ENCODE measurements at regions of chr21 and their contacts with region 1.

Region 1: GRCh38 chr21:43909741-43910486 is 44.9 kb downstream of the AGPAT3 start:
- DNase-seq: no peak
- H3K4me3 ChIP-seq: no peak overlapping the region
- H3K27ac ChIP-seq: no peak overlapping the region
- H3K4me1 ChIP-seq: peaks cover 9% of the 10 kb centered on the region
- H3K27me3 ChIP-seq: no peaks in the 10 kb centered on the region
- CTCF ChIP-seq: no peak

Region 2: GRCh38 chr21:43816611-43817478 is 93.1 kb before region 1 on chr21:
- CTCF ChIA-PET with region 1: no interaction called
- dilution Hi-C with region 1: loop called (anchors 5 kb)
- in situ Hi-C with region 1: no loop called
- intact Hi-C with region 1: no loop called
- DNase-seq: no peak
- H3K4me3 ChIP-seq: no peak overlapping the region
- H3K27ac ChIP-seq: no peak overlapping the region
- H3K4me1 ChIP-seq: peaks cover 15% of the 10 kb centered on the region
- H3K27me3 ChIP-seq: no peaks in the 10 kb centered on the region
- CTCF ChIP-seq: no peak

Region 3: DNA sequence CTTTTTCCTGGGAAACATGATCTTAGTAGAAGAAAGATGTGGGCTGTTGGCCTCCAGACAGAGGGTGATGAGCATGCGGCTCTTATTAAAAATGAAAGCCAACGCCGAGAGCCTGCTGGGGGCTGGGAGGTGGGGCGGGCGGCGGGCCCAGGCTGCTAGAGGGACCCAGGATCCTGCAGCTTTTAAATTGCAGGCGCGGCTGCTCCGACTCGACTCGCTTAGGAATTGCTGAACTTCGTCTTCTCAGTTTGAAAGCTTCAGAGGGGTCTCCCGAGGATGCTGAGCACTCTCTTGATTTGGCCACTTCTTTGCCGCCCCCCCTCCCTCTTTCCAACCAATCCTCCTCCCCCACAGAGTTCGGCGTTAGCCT is 43.7 kb before region 1 on chr21:
- CTCF ChIA-PET with region 1: no interaction called
- dilution Hi-C with region 1: loop called (anchors 5 kb)
- in situ Hi-C with region 1: no loop called
- intact Hi-C with region 1: no loop called
- DNase-seq: peak; percentile 29
- H3K4me3 ChIP-seq: peak overlapping the region; percentile 55 to 62 (median 58)
- H3K27ac ChIP-seq: no peak overlapping the region
- H3K4me1 ChIP-seq: peaks cover 14% of the 10 kb centered on the region
- H3K27me3 ChIP-seq: no peaks in the 10 kb centered on the region
- CTCF ChIP-seq: no peak

Region 4: GRCh38 chr21:43938751-43939442 is 29.0 kb after region 1 on chr21:
- CTCF ChIA-PET with region 1: no interaction called
- dilution Hi-C with region 1: loop called (anchors 5 kb)
- in situ Hi-C with region 1: no loop called
- intact Hi-C with region 1: no loop called
- DNase-seq: peak; percentile 46
- H3K4me3 ChIP-seq: peak overlapping the region; percentile 43 to 59 (median 54)
- H3K27ac ChIP-seq: no peak overlapping the region
- H3K4me1 ChIP-seq: peaks cover 4% of the 10 kb centered on the region
- H3K27me3 ChIP-seq: no peaks in the 10 kb centered on the region
- CTCF ChIP-seq: peak; percentile 96 to 100